ENCODE measurements at regions of chr9 and their contacts with region 1.

Region 1: DNA sequence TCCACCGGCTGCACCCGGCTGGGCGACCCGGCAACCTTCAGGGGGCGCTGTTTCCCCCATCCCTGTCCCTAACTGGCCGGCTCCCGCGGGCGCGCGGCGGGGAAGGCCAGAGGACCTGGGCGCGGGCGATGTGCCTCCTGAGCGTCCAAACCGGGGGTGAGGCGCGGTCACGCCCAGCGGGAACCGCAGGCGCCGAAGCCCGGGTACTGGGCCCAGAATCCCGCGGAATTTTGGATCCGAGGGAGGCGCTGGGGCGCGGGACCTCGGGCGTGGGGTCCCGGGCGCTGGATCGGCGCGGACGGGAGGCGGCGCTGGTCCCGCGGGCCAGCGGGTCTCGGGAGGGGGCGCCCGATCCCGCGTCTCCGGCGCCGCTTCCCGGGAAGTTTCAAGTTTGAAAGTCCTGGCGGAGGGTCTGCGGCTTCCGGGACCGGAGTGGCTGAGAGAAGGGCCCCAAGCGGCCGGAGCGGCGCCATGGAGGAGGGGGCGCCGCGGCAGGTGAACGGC is at the start of gene PKN3:
- DNase-seq: peak; percentile 95
- ATAC-seq: peak; percentile 85
- H3K4me3 Mint-ChIP-seq: peak within 1 kb of the TSS; percentile 73
- H3K27ac Mint-ChIP-seq: peak within 1 kb of the TSS; percentile 74
- H3K4me1 Mint-ChIP-seq: peaks cover 10% of the 10 kb centered on the region
- H3K27me3 Mint-ChIP-seq: no peaks in the 10 kb centered on the region
- total RNA-seq, gene PKN3: 14.6 to 14.9 TPM

Region 2: DNA sequence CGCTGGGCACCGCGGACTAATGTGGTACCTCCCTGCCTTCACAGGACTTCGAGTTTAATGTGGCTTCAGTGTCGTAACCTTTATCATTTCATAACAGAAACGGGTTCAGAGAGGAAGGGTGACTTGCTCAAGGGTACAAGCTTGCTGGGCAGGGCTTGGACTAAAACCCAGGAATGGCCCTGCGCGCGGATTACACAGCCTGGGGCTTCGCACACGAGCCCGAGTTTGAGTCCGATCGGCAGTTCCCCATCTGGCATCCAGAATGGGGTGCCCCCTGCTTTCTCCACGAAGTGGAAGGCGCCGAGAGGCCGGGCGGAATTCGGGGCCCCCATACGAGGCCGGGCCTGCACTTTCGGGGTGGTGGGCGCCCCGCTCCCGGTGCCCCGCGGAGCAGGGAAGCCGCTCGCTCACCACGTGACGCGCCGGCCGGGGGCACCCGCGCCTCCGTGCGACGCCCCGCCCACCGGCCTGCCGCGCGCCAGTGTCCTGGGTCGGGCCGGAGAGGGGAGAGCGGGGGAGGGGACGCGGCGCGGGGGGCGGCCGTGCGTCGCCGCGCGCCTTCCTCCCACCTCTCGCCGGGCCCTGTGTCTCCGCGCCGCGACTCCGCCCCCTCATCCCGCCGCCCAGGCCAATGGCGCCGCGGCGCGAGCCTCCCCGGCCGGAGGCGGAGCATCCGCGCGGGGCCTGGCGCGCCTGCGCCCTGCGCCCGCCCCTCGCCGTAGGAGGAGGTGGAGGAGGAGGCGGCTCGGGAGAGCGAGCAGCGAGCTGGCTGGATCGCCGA is 13.8 kb before region 1 on chr9 and contains the start of gene SET:
- CTCF ChIA-PET with region 1: interaction called, 24 read pairs
- POLR2A ChIA-PET with region 1: interaction called, 7 read pairs
- intact Hi-C with region 1: loop called in 1 of 2 experiments (anchors 1 kb)
- DNase-seq: peak; percentile 96
- ATAC-seq: peak; percentile 71
- H3K4me3 Mint-ChIP-seq: peak within 1 kb of the TSS; percentile 99
- H3K27ac Mint-ChIP-seq: peak within 1 kb of the TSS; percentile 94
- H3K4me1 Mint-ChIP-seq: peaks cover 61% of the 10 kb centered on the region
- H3K27me3 Mint-ChIP-seq: no peaks in the 10 kb centered on the region
- total RNA-seq, gene SET: 673 to 682 TPM

Region 3: DNA sequence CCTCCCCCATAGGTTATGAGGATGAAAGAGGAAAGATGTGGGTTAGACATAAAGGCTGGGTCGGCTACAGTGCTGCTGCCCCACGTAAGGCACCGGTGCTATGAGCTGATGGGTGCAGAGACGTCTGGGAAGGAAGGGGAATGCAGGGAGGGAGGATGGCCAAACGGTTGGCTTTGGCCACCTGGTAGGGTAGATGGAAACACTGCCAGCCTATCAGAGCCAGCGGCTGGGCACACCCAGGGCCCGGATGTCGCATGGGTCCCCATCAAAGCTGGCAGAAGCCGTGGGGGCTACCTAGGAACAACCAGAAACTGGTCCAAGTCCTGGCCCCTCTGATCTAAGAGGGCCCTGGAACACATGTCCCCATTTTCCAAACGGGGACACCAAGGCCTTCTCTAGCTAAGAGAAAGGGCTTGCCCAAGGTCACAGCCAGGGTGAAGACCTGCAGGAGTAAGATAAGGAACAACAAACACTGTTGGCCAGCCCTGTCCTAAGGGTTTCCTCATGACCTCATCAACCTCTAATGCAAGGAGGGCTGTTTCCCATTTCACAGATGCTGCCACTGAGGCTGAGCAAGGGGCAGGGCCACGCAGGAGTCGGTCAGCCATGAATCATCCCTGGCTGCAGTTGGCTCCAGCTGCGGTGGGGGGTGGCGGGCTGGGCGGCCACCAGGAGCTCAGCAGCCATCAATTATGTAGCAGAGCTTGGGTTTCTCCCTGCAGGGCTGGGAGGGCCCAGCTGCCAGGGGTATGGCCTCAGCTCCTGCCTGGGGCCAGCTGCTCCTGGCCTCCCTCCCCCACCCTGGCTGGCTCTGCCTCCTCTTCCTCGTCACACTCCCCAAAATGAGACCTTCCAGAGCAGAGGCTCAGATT is 320.8 kb after region 1 on chr9:
- CTCF ChIA-PET with region 1: no interaction called
- POLR2A ChIA-PET with region 1: no interaction called
- intact Hi-C with region 1: no loop called
- DNase-seq: no peak
- ATAC-seq: no peak
- H3K4me3 Mint-ChIP-seq: no peak overlapping the region
- H3K27ac Mint-ChIP-seq: no peak overlapping the region
- H3K4me1 Mint-ChIP-seq: peaks cover 24% of the 10 kb centered on the region
- H3K27me3 Mint-ChIP-seq: no peaks in the 10 kb centered on the region

Measured in activated CD4-positive, alpha-beta T cell treated with anti-CD3 and anti-CD28 coated beads for 36 hours (primary cell).